Dorsolateral prefrontal cortex (tissue), 120 donors: ENCODE measurements at regions of chr1 and their contacts with region 1.

Region 1: GRCh38 chr1:109112652-109113285 is 1.1 kb upstream of the ELAPOR1 start:
- DNase-seq: peak; percentile 89 to 96 (median 94)
- H3K4me3 ChIP-seq: peak overlapping the region in 58 of 59 donors; percentile 21 to 80 (median 65)
- H3K27ac ChIP-seq: peak overlapping the region in 50 of 59 donors; percentile 7 to 88 (median 61)
- H3K27me3 ChIP-seq: no peaks in the 10 kb centered on the region
- CTCF ChIP-seq: peak; percentile 90 to 100 (median 96)

Region 2: DNA sequence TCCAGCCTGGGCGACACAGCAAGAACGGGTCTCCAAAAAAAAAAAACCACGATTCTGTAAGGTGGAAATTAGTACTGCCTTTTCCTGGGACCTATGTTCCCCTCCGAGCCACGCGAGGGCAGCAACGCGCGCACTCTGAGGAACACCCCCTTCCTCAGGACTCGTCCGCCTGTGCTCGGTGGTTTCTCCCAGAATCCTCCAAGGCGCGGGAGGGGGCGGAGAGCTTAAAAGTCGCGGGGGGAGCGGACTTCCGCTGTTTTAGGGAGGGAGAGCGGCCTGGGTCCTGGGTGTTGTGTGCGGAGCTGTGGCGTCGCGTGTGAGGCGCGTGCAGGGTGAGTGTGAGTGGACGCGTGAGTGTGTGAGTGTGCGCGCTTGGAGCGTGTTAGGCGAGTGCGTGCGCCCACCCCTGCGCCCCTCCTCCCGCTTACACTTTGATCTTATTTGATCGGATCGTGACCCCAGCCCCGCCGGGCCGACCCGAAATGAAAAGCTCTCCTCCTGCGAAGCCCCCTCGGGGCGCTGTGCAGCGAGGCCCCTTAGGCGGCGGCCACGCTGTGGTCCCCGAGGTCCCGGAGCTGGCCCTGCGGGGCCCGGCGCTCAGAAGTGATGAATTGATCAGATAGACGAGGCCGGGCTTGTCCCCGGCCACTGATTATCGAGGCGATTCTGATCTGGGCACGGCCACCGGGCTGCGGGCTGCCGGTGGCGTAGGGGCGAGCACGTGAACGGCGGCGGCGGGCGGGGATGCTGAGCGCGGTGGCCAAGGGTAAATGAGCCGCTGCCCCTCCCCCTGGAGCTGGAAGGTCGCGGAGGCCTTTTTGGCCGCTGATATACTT is 12.6 kb before region 1 on chr1:
- intact Hi-C with region 1: loop called in 1 of 2 experiments (anchors 2 kb)
- DNase-seq: peak; percentile 91 to 97 (median 96)
- H3K4me3 ChIP-seq: peak overlapping the region; percentile 69 to 100 (median 97)
- H3K27ac ChIP-seq: peak overlapping the region; percentile 84 to 100 (median 98)
- H3K27me3 ChIP-seq: no peaks in the 10 kb centered on the region
- CTCF ChIP-seq: peak; percentile 83 to 99 (median 95)

Region 3: GRCh38 chr1:109213785-109214468 is 101.2 kb after region 1 on chr1 and contains the start of gene SARS1:
- intact Hi-C with region 1: loop called in 1 of 2 experiments (anchors 5 kb)
- DNase-seq: peak; percentile 79 to 93 (median 85)
- H3K4me3 ChIP-seq: peak within 1 kb of the TSS; percentile 58 to 99 (median 92)
- H3K27ac ChIP-seq: peak within 1 kb of the TSS; percentile 66 to 98 (median 93)
- H3K27me3 ChIP-seq: no peaks in the 10 kb centered on the region
- CTCF ChIP-seq: peak in 12 of 56 donors; percentile 8 to 39 (median 16)
- total RNA-seq, gene SARS1: 109 to 280 (median 226) TPM

Region 4: GRCh38 chr1:109341944-109342930 is 229.5 kb after region 1 on chr1:
- intact Hi-C with region 1: no loop called
- DNase-seq: no peak
- H3K4me3 ChIP-seq: no peak overlapping the region
- H3K27ac ChIP-seq: peak overlapping the region in 27 of 59 donors; percentile 0 to 64 (median 29)
- H3K27me3 ChIP-seq: no peaks in the 10 kb centered on the region
- CTCF ChIP-seq: no peak

Region 5: DNA sequence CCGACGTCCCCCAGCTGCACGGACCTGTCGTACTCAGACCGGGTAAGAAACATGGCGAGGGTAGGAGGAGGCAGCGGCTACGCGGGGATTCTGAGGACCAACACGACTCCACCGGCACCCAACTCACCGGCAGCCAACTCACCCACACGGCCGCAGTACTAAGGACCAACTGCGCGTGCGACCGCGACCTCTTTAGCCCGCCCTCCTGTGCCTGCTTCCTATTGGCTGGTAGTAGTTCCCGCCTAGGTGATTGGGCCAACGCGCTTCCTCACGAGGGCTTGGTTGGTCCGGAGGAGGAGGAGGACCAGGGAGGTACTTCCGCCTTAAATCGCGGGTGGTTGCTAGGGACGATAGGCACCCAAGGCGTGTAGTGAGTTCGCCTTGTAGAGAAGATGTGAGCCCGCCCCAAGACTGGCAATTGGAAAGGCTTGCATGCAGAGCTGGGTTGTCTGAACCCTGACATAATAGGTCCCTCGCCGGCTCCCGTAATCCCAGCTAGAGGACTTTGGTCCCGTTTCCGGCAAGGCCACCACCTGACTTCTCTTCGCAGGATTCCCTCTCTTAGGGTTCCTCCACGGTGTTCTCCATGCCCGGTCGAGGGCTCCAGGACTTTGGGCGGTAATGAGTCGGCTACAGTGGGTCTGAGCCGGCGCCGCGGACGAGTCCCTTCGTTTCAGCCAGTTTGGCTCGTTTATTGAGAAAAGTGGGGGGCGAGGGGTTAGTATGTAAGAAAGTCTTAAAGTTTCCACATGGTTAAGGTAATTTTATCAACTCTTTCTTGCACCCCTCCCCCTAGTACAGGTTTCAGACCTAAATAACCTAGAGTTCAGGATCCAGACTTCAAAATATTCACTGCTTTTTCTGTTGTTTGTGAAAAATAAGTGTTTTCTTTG is 313.8 kb after region 1 on chr1 and contains the start of gene PSMA5:
- intact Hi-C with region 1: loop called in 1 of 2 experiments (anchors 10 kb)
- DNase-seq: peak; percentile 91 to 98 (median 97)
- H3K4me3 ChIP-seq: peak within 1 kb of the TSS; percentile 70 to 99 (median 94)
- H3K27ac ChIP-seq: peak within 1 kb of the TSS in 58 of 59 donors; percentile 2 to 92 (median 82)
- H3K27me3 ChIP-seq: no peaks in the 10 kb centered on the region
- CTCF ChIP-seq: peak in 20 of 56 donors; percentile 4 to 48 (median 27)
- total RNA-seq, gene PSMA5: 25.5 to 74.2 (median 56.7) TPM